GM10248 (cell line): ENCODE measurements at regions of chr6 and their contacts with region 1.

Region 1: GRCh38 chr6:166849749-166850183 is 106.6 kb downstream of the RNASET2 start:
- DNase-seq: no peak
- CTCF ChIP-seq: no peak

Region 2: DNA sequence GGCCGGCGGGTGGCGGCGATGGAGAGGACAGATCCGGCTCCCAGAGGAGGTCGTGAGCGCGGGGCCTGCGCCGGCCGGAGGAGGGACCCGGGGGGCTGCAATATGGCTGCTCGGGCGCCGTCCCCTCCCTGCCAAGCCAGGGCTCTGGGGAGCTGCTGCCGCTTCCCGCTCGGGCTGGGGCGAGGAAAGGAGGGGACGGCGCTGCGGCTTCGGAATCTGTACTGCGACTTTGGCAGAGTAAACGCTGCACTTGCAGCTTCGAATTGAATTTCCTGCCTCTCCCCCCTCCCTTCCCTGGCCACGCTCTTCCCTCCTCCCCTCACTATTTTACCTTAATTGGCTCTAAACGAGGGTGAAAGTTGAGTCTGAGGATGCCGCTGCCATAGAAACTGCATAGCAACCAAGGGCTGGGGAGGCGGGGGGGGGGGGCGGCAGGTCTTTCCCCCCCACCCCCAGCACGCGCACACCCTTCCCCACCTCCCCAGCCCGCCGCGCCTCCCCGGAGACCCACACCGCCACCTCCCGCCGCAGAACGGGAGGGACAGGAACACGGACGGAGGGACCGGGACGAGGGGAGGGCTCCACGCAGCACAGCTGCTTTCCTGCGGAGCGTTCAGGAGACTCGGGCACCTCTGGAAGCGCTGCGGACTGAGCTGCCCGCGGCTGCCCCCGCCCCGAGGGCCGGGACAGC is 12.7 kb after region 1 on chr6:
- CTCF ChIA-PET with region 1: interaction called, 12 read pairs
- POLR2A ChIA-PET with region 1: no interaction called
- DNase-seq: peak; percentile 73
- CTCF ChIP-seq: peak; percentile 24

Region 3: GRCh38 chr6:166940643-166941068 is 90.9 kb after region 1 on chr6:
- CTCF ChIA-PET with region 1: no interaction called
- POLR2A ChIA-PET with region 1: no interaction called
- DNase-seq: no peak
- CTCF ChIP-seq: no peak